Naive thymus-derived CD4-positive, alpha-beta T cell (primary cell): ENCODE measurements at regions of chr11 and their contacts with region 1.

Region 1: DNA sequence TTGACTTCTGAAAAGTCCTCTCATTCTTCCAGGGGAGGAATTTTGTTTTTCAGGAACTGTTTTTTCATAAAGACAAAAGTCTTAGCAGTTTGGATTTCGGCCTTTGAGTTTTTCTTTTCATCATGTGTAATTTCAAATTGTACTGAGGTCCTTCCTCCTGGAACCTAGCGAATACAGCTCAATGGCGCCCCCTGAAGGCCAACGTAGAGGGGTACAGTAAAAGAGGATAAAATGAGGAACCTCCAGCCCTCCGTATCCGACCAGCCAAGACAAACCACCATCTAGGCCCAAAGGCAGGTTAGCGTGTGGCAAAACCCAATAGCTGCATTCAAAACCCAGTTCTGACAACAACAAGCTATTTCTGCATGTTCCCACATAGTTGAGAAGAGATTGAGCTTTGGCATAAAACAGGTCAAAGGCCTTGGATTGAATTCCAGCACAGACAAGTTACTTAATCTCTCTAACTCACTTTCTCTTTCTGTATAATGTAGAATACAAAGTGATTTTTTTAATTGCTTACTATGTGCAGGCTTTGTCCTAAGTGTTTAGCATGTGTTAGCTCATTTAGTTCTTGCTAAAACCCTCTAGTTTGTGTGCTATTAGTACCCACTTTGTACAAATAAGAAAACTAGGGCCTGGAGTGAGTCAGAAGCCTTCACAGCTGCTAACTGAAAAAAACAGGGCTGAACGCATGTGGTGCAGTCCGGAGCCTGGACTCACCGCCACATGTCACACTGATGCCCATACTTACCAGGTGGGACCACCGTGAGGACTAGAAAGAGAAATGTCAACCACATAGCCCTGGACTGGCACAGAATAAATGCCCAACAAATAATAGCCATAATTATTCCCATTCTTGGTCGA is 43.2 kb upstream of the ETS1 start:
- DNase-seq: peak; percentile 78 to 93 (median 86)
- ATAC-seq: peak; percentile 92
- H3K4me3 ChIP-seq: peak overlapping the region; percentile 17
- H3K4me3 Mint-ChIP-seq: peak overlapping the region; percentile 56 to 85 (median 76)
- H3K27ac ChIP-seq: peak overlapping the region; percentile 63
- H3K27ac Mint-ChIP-seq: peak overlapping the region; percentile 88 to 100 (median 95)
- H3K4me1 ChIP-seq: peaks cover 53 to 61% of the 10 kb centered on the region in 2 donors
- H3K4me1 Mint-ChIP-seq: peaks cover 46 to 73% (median 68%) of the 10 kb centered on the region in 7 donors
- H3K27me3 ChIP-seq: no peaks in the 10 kb centered on the region
- H3K27me3 Mint-ChIP-seq: no peaks in the 10 kb centered on the region

Region 2: DNA sequence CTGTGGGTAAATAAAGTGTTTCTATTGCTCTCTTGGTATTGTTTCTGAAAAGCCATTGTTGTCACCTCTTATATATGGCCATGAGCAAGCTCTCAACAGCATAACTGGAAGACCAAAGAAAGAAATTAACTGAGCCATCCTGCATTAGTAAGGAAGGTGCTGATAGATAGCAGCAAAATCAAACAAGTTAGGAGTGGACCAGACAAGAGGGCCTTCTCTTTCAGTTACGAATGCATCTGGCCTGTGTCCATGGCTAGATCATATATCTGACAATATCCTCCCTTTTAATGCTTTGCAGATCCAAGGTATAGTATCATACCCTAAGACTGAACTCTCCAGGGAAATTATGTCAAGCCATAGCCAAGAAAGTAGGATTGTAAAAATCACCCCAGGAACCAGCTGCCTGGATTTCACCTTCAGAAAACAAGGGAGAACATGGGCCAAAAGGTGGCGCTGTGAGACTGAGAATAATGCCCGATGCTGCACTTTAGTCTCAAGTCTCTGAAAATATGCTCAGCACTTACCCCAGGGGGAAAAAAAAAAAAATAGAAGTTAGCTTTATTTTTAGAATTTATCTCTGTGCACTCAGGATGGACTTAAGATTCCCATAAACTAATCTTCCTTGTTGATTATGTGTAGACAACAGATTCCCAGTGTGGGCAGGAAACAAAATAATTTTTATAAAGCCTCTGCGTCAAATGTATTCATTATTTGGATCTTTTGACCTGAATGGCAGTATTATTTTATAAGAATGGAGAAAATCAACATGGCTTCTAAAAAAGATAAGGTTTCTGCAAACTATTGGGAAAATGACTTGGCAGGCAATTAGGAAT is 458.3 kb before region 1 on chr11:
- CTCF ChIA-PET with region 1: interaction called, 117 read pairs
- POLR2A ChIA-PET with region 1: interaction called, 6 read pairs
- intact Hi-C with region 1: loop called (anchors 1 kb)
- DNase-seq: peak; percentile 59 to 82 (median 75)
- ATAC-seq: peak; percentile 85
- H3K4me3 ChIP-seq: no peak overlapping the region
- H3K4me3 Mint-ChIP-seq: no peak overlapping the region
- H3K27ac ChIP-seq: no peak overlapping the region
- H3K27ac Mint-ChIP-seq: peak overlapping the region in 2 of 9 donors; percentile 27 to 70
- H3K4me1 ChIP-seq: no peaks in the 10 kb centered on the region
- H3K4me1 Mint-ChIP-seq: peaks cover 0 to 9% (median 4%) of the 10 kb centered on the region in 7 donors
- H3K27me3 ChIP-seq: no peaks in the 10 kb centered on the region
- H3K27me3 Mint-ChIP-seq: peaks cover 0 to 15% (median 0%) of the 10 kb centered on the region in 5 donors

Region 3: DNA sequence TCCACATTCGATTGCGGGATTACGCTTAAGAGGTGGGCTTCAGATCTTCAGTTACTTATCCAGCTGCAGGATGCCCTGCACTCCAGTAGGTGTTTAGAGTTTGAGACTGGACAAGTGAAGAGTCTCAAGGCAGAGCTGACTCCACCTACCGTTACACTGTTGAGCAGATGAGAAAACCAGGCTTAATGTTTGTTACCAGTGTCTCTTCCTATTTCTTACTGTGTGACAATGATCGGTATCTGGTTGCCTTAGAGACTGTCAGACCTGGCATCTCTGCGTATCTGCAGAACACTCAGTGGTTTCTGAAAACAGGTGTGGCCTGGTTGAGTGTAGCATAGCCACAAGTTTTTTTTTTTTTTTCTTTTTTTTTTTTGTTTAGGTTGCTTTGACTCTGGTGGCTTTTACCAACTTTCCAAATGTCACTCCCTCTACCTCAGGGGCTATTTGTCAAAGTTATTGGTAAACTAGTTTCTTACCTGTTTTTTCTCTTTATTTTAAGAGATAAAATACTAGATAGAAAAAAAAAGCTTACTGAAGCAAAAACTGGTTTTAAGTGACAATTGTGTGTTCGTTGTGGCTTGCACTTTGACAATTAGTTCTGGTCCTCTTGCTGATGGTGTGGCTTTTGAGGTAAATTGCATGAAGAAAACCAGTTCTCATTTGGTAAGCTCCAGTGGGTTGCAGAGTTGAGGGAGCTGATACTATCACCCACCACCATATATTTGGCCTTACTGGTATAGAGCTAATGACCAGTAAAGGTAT is 328.0 kb before region 1 on chr11:
- CTCF ChIA-PET with region 1: interaction called, 21 read pairs
- POLR2A ChIA-PET with region 1: interaction called, 19 read pairs
- intact Hi-C with region 1: no loop called
- DNase-seq: peak; percentile 39 to 97 (median 92)
- ATAC-seq: peak; percentile 92
- H3K4me3 ChIP-seq: peak overlapping the region; percentile 52
- H3K4me3 Mint-ChIP-seq: peak overlapping the region; percentile 81 to 98 (median 93)
- H3K27ac ChIP-seq: peak overlapping the region; percentile 98
- H3K27ac Mint-ChIP-seq: peak overlapping the region; percentile 93 to 100 (median 98)
- H3K4me1 ChIP-seq: peaks cover 83 to 95% of the 10 kb centered on the region in 2 donors
- H3K4me1 Mint-ChIP-seq: peaks cover 52 to 92% (median 88%) of the 10 kb centered on the region in 7 donors
- H3K27me3 ChIP-seq: no peaks in the 10 kb centered on the region
- H3K27me3 Mint-ChIP-seq: no peaks in the 10 kb centered on the region

Region 4: GRCh38 chr11:128472128-128473089 is 158.2 kb before region 1 on chr11:
- CTCF ChIA-PET with region 1: interaction called, 15 read pairs
- POLR2A ChIA-PET with region 1: interaction called, 43 read pairs
- intact Hi-C with region 1: loop called in 1 of 2 experiments (anchors 2 kb)
- DNase-seq: peak in 5 of 9 donors; percentile 38 to 77 (median 57)
- ATAC-seq: peak; percentile 17
- H3K4me3 ChIP-seq: peak overlapping the region; percentile 63
- H3K4me3 Mint-ChIP-seq: peak overlapping the region; percentile 73 to 99 (median 82)
- H3K27ac ChIP-seq: peak overlapping the region; percentile 97
- H3K27ac Mint-ChIP-seq: peak overlapping the region; percentile 92 to 100 (median 98)
- H3K4me1 ChIP-seq: peaks cover 98 to 100% of the 10 kb centered on the region in 2 donors
- H3K4me1 Mint-ChIP-seq: peaks cover 76 to 100% (median 98%) of the 10 kb centered on the region in 7 donors
- H3K27me3 ChIP-seq: no peaks in the 10 kb centered on the region
- H3K27me3 Mint-ChIP-seq: no peaks in the 10 kb centered on the region

Region 5: DNA sequence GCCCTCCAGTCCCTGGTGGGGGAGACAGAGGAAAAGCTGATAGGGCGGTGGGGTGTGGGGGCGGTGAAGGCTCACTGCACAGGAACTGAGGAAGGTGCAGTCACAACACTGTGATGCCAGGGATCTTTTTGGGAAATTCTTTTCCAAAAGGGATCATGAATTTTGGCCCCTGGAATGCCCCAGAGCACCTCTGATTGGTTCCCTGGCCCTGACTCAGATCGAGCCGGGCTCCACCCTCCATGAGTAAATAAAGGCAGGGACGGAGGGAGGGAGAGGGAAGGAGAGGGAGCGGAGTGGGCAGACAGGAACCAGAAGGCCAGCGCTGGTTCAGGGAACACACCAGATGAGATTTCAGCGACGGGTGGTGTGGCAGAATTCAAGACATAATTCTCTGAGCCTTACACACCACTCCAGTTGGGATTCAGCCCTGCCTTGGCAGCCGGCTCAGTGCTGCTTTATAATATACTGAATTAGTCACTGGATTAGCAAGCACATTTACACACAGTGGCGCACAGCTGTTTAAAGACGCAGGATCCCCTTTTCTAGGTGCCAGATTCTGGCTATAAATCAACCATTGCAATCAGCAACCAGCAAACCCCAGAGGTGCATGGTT is 123.5 kb before region 1 on chr11:
- CTCF ChIA-PET with region 1: interaction called, 25 read pairs
- POLR2A ChIA-PET with region 1: interaction called, 83 read pairs
- intact Hi-C with region 1: loop called in 1 of 2 experiments (anchors 1 kb)
- DNase-seq: peak in 1 of 9 donors; percentile 60
- ATAC-seq: no peak
- H3K4me3 ChIP-seq: peak overlapping the region; percentile 96
- H3K4me3 Mint-ChIP-seq: peak overlapping the region; percentile 85 to 100 (median 98)
- H3K27ac ChIP-seq: peak overlapping the region; percentile 97
- H3K27ac Mint-ChIP-seq: peak overlapping the region; percentile 87 to 99 (median 97)
- H3K4me1 ChIP-seq: peaks cover 89 to 91% of the 10 kb centered on the region in 2 donors
- H3K4me1 Mint-ChIP-seq: peaks cover 70 to 98% (median 92%) of the 10 kb centered on the region in 7 donors
- H3K27me3 ChIP-seq: no peaks in the 10 kb centered on the region
- H3K27me3 Mint-ChIP-seq: no peaks in the 10 kb centered on the region

Region 6: DNA sequence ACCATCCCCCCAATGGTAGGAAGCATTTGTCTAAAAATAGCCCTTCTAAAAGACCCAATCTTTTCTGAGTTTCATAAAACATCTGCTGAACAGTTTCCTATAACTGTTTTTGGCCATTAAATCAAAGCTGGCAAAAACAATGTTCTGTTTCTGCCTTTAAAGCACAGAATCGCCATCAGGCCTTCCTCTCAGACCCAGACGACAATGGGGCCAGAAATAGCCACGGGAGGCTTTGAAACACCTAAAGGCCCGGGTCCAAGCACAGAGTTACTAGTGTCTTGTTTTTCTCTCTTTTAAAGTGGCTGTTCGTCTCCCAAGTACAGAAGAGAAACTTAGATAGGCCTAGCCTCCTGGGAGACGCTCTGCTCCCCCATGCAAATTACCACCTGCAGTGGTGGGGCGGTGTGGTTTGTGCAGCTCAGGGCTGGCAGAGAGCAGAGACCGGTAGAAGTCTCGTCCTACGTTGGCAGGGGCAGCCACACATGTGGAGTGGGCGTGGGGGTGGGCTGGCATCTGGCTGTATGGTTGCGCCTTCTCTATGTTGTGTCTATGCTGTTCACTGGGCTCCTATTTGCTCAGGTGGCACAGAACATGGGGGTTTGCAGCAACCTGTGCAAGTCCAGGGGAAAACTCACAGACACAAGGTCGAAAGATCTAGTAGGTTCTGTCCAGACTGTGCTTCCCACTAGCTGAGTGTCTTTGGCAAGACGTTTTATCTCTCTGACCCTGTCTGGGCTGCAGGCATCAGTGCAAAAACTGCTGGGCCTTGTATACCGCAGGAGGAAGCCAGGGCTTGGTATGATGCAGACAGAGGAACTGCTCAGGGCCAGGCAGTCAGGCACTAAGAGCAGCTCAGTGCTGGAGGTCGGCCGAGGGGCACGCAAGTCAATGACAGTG is 19.6 kb before region 1 on chr11:
- CTCF ChIA-PET with region 1: interaction called, 12 read pairs
- POLR2A ChIA-PET with region 1: interaction called, 145 read pairs
- intact Hi-C with region 1: no loop called
- DNase-seq: peak; percentile 34 to 76 (median 62)
- ATAC-seq: peak; percentile 91
- H3K4me3 ChIP-seq: peak overlapping the region; percentile 11
- H3K4me3 Mint-ChIP-seq: peak overlapping the region; percentile 57 to 85 (median 76)
- H3K27ac ChIP-seq: peak overlapping the region; percentile 76
- H3K27ac Mint-ChIP-seq: peak overlapping the region; percentile 87 to 99 (median 95)
- H3K4me1 ChIP-seq: peaks cover 21 to 58% of the 10 kb centered on the region in 2 donors
- H3K4me1 Mint-ChIP-seq: peaks cover 31 to 88% (median 76%) of the 10 kb centered on the region in 7 donors
- H3K27me3 ChIP-seq: no peaks in the 10 kb centered on the region
- H3K27me3 Mint-ChIP-seq: no peaks in the 10 kb centered on the region

Region 7: GRCh38 chr11:128669506-128670270 is 39.1 kb after region 1 on chr11:
- CTCF ChIA-PET with region 1: no interaction called
- POLR2A ChIA-PET with region 1: no interaction called
- intact Hi-C with region 1: no loop called
- DNase-seq: no peak
- ATAC-seq: no peak
- H3K4me3 ChIP-seq: no peak overlapping the region
- H3K4me3 Mint-ChIP-seq: no peak overlapping the region
- H3K27ac ChIP-seq: no peak overlapping the region
- H3K27ac Mint-ChIP-seq: no peak overlapping the region
- H3K4me1 ChIP-seq: no peaks in the 10 kb centered on the region
- H3K4me1 Mint-ChIP-seq: peaks cover 0 to 9% (median 0%) of the 10 kb centered on the region in 7 donors
- H3K27me3 ChIP-seq: no peaks in the 10 kb centered on the region
- H3K27me3 Mint-ChIP-seq: peaks cover 0 to 52% (median 0%) of the 10 kb centered on the region in 5 donors

Region 8: DNA sequence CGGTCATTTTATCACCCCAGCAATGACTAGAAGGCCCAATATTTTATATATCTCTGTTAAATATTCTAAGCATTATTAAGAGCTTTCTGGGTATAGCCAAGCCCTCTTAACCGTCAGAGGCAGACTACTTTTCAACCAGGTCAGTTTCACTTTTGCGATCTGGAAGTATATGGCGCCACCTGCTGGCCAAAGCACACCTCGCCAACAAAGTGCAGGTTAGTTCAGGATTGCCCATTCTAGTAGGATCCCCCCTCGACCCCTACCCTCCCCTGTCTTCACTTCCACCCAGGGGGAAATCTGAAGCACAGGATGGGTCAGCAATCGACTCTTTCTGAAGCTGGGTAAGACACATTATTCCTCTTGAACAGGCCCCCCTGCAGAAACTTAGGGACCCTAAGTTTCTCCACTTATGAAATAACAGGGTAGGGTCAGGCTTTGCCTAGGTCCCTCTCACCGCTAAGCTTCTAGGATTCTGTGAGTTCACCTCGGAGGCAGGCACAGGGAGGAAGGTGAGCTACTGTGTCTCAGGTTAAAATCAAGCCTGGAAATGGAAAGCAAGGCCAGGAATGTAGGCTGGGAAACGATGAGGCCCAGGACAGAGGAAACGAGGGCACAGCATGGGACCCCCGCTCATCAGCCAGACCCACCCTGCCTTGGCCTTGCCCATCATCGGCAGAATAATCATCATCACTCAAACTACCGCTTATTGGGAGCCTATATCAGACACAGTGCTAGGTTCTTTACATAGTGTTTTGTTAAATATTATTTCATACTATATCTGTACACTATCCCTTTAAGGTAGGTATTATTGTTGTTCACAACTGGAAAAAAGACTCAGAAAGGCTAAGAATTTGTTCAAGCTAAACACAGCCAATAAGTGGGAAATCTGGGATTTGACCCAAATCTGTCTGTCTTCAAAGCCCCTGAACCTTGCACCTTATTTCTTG is 200.8 kb after region 1 on chr11:
- CTCF ChIA-PET with region 1: interaction called, 53 read pairs
- POLR2A ChIA-PET with region 1: interaction called, 4 read pairs
- intact Hi-C with region 1: loop called (anchors 1 kb)
- DNase-seq: peak; percentile 68 to 85 (median 80)
- ATAC-seq: peak; percentile 90
- H3K4me3 ChIP-seq: peak overlapping the region; percentile 43
- H3K4me3 Mint-ChIP-seq: peak overlapping the region; percentile 61 to 87 (median 76)
- H3K27ac ChIP-seq: peak overlapping the region; percentile 67
- H3K27ac Mint-ChIP-seq: peak overlapping the region; percentile 58 to 98 (median 89)
- H3K4me1 ChIP-seq: peaks cover 11 to 15% of the 10 kb centered on the region in 2 donors
- H3K4me1 Mint-ChIP-seq: peaks cover 15 to 35% (median 24%) of the 10 kb centered on the region in 7 donors
- H3K27me3 ChIP-seq: no peaks in the 10 kb centered on the region
- H3K27me3 Mint-ChIP-seq: peaks cover 0 to 4% (median 0%) of the 10 kb centered on the region in 5 donors

Region 9: GRCh38 chr11:128884703-128885338 is 254.2 kb after region 1 on chr11:
- CTCF ChIA-PET with region 1: no interaction called
- POLR2A ChIA-PET with region 1: no interaction called
- intact Hi-C with region 1: no loop called
- DNase-seq: peak in 8 of 9 donors; percentile 41 to 69 (median 60)
- ATAC-seq: peak; percentile 79
- H3K4me3 ChIP-seq: no peak overlapping the region
- H3K4me3 Mint-ChIP-seq: no peak overlapping the region
- H3K27ac ChIP-seq: no peak overlapping the region
- H3K27ac Mint-ChIP-seq: no peak overlapping the region
- H3K4me1 ChIP-seq: no peaks in the 10 kb centered on the region
- H3K4me1 Mint-ChIP-seq: peaks cover 0 to 8% (median 3%) of the 10 kb centered on the region in 7 donors
- H3K27me3 ChIP-seq: peaks cover 7 to 9% of the 10 kb centered on the region in 2 donors
- H3K27me3 Mint-ChIP-seq: peaks cover 54 to 78% (median 73%) of the 10 kb centered on the region in 5 donors

Region 10: DNA sequence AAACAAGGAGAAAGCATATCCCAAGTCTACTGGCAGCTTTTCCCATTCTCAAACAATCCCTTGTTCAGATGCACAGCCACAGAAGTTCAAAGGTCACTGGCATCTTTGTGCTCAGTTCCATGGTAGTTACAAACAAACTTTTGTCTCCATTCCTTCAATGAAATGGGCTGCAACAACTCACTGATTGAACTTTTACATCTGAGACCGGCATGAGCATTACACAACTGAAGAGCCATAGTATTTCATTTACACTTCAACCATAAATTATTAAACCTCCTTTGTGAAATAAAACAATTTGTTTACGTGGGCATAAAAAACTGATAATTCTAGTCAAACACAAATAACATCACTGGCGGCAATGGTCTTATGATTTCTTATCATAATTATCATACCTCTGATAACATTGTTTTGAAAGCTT is 629.3 kb after region 1 on chr11:
- CTCF ChIA-PET with region 1: no interaction called
- POLR2A ChIA-PET with region 1: no interaction called
- intact Hi-C with region 1: no loop called
- DNase-seq: no peak
- ATAC-seq: no peak
- H3K4me3 ChIP-seq: no peak overlapping the region
- H3K4me3 Mint-ChIP-seq: no peak overlapping the region
- H3K27ac ChIP-seq: no peak overlapping the region
- H3K27ac Mint-ChIP-seq: no peak overlapping the region
- H3K4me1 ChIP-seq: no peaks in the 10 kb centered on the region
- H3K4me1 Mint-ChIP-seq: peaks cover 0 to 7% (median 0%) of the 10 kb centered on the region in 7 donors
- H3K27me3 ChIP-seq: no peaks in the 10 kb centered on the region
- H3K27me3 Mint-ChIP-seq: no peaks in the 10 kb centered on the region